ENCODE measurements at regions of chr3 and their contacts with region 1.

Region 1: GRCh38 chr3:142279965-142280590 is 54.7 kb upstream of the GK5 start:
- DNase-seq: peak; percentile 66
- H3K4me3 ChIP-seq: no peak overlapping the region
- H3K27ac ChIP-seq: no peak overlapping the region
- H3K4me1 ChIP-seq: no peaks in the 10 kb centered on the region
- H3K27me3 ChIP-seq: peaks cover 0 to 2% of the 10 kb centered on the region in 2 experiments
- CTCF ChIP-seq: peak; percentile 43 to 49
- POLR2A ChIP-seq: no peak

Region 2: DNA sequence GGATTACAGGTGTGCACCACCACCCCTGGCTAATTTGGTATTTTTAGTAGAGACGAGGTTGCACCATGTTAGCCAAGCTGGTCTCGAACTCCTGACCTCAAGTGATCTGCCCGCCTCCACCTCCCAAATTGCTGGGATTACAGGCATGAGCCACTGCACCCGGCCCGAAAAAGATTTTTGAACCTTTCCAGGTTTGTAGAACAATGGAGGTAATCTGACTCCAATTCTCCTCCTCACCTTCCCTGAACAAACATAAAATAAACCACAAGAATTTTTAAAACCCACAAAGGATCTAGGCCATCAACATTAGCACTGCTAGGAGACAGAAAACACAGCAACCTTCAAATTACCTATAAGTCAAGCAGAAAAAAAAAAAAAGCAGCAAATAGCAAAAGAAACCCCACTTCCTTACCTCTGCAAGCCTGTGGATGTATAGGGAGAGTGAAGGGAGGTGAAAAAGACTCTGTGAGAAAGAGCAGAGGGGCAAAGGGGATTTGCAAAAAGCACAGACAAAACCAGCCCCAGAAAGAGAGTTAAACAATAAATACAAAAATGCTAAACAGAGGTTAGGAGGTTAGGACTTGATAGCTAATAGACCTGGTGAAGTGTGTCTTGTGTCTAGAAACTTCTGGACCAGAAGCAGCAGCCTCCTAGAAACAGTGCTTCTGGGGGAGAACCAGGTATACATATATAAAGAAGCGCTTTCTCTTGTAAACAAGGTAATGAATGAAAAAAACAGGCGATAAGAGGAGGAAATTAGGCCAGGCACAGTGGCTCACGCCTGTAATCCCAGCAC is 162.8 kb before region 1 on chr3:
- CTCF ChIA-PET with region 1: interaction called, 12 read pairs
- POLR2A ChIA-PET with region 1: no interaction called
- dilution Hi-C with region 1: no loop called
- intact Hi-C with region 1: no loop called
- DNase-seq: no peak
- H3K4me3 ChIP-seq: no peak overlapping the region
- H3K27ac ChIP-seq: no peak overlapping the region
- H3K4me1 ChIP-seq: no peaks in the 10 kb centered on the region
- H3K27me3 ChIP-seq: no peaks in the 10 kb centered on the region
- CTCF ChIP-seq: no peak
- POLR2A ChIP-seq: no peak

Measured in endothelial cell of umbilical vein (primary cell).